ENCODE measurements at regions of chr18 and their contacts with region 1.

Region 1: GRCh38 chr18:67104700-67105284 is 411.7 kb downstream of the DSEL start:
- DNase-seq: peak; percentile 43
- H3K4me3 ChIP-seq: no peak overlapping the region
- H3K27ac ChIP-seq: no peak overlapping the region
- H3K4me1 ChIP-seq: no peaks in the 10 kb centered on the region
- H3K27me3 ChIP-seq: no peaks in the 10 kb centered on the region
- CTCF ChIP-seq: peak; percentile 47

Region 2: GRCh38 chr18:67199993-67200617 is 95.3 kb after region 1 on chr18:
- intact Hi-C with region 1: loop called (anchors 5 kb)
- DNase-seq: no peak
- H3K4me3 ChIP-seq: no peak overlapping the region
- H3K27ac ChIP-seq: no peak overlapping the region
- H3K4me1 ChIP-seq: no peaks in the 10 kb centered on the region
- H3K27me3 ChIP-seq: no peaks in the 10 kb centered on the region
- CTCF ChIP-seq: peak; percentile 55

Measured in colonic mucosa (tissue), 4 donors.